Activated B cell treated with CpG ODN at 0.5 μM for 24 hours (primary cell): ENCODE measurements at regions of chr19 and their contacts with region 1.

Region 1: DNA sequence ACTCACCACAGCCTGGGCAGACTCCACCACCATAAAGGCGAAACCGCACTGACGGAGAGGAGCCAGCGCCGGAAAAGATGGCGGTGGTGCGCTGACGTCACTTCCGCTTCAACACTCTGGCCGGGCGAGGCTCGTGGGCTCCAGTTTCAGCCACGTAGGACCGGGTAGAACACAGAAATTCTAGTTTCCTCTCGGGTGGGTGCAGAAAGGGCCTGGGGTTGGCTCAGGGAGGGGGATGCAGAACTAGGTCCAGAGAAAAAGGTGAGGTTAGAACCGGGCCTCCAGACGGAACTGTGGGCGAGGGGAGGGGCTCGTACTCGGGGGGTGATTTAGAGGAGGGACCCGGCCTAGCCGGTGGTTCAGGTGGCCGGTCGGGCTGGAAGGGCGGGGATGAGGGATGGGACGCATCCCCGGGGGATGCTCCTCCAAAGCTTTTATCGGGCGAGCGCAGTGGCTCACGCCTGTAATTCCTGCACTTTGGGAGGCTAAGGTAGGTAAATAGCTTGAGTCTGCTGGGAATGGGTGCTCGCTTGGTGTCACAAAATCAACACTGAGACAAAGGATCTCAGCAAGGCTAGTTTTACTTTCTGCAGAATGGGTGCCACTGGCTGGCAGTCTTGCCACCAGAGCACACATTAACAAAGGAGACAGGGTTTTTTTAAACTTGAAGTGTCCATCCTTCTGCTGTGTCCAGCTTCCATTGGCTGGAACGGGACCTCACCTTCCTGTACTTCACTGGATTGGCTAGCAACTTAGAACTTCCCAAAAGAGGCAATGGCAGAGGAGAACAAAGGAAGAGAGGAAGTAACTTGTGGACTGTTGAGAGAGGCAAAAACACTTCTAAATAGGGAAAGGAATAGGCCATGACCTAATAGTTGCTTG is at the start of gene ZNF561:
- DNase-seq: peak; percentile 81
- ATAC-seq: peak; percentile 88
- H3K4me3 Mint-ChIP-seq: peak within 1 kb of the TSS; percentile 96
- H3K27ac Mint-ChIP-seq: peak within 1 kb of the TSS; percentile 98
- H3K4me1 Mint-ChIP-seq: peaks cover 20% of the 10 kb centered on the region
- H3K27me3 Mint-ChIP-seq: peaks cover 3% of the 10 kb centered on the region
- CTCF ChIP-seq: no peak
- total RNA-seq, gene ZNF561: 37.1 and 40.2 TPM in 2 replicates

Region 2: DNA sequence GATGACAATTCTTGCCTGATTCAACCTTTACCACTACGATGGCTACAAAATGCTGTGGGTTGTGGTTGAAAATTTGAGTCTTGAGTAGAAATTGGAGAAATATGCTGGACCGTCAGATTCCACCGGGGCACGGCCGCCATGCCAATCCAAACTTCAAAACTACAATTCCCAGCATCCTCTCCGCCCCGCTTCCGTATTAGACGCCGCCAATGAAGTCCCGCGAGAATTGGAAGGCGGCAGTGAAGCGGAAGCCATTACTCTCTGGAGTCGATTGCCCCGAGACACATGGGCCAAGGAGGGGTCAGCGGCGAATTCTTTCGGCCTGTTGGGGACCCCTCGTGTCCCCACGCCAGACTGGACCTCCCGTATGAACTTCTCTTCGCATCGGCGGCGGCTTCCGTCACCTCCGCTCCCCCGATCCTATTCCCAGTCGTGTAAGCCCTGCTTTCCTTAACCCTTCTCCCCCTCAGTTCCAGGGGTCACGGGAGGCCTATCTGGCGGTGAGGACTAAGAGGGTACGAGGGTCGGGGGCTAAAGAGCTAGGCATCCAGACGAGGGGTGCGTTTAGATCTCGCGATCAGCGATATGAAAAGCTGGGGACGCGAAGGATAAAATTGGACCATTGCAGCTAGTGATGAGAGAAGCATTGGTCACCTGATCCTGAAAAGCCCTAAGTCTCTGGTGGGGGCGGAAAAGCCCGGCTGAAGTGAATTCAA is 481.1 kb before region 1 on chr19 and contains the start of gene ZNF317:
- CTCF ChIA-PET with region 1: no interaction called
- POLR2A ChIA-PET with region 1: no interaction called
- intact Hi-C with region 1: loop called (anchors 1 kb)
- DNase-seq: peak; percentile 74
- ATAC-seq: peak; percentile 93
- H3K4me3 Mint-ChIP-seq: peak within 1 kb of the TSS; percentile 99
- H3K27ac Mint-ChIP-seq: peak within 1 kb of the TSS; percentile 98
- H3K4me1 Mint-ChIP-seq: peaks cover 42% of the 10 kb centered on the region
- H3K27me3 Mint-ChIP-seq: peaks cover 3% of the 10 kb centered on the region
- CTCF ChIP-seq: no peak
- total RNA-seq, gene ZNF317: 64.4 and 65.8 TPM in 2 replicates

Region 3: DNA sequence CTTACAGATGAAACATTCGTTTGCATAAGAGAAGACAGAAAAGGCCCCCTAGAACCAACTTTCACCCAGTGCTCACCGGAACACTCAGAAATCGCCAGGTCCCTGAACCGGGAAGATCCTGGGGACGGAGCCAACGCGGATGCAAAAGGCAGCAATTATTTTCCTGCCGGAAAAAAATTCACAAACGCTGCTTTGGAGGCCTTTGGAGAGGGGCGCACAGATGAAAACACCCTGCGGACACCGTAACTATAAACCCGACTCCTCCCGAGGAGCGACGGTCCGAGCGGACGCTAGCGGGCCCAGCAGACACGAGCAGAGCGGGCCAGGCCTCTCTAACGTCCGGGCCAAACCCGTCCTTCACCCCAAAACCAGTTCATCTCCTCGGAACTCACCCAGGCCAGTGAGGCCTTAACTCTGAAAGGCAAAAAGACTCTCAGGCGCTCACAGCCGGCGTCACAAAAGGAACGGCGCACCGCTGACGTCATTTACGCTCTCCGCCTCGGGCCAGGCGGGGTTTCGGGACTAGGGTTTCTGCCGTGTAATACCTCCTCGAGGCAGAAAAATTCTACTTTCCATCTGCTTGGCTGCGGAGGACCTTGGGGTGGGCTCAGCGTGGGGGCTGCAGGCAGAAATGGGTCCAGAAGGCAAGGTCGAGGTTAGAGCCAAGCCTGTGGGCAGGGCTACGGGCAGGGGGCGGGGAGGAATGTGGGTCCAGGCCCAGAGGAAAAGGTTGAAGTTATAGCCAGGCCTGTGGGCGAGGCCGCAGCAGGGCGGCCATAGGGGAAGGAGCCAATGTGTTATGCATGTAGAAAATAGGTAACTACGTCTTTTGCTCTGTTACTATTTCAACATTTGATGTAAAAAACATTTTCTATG is 83.0 kb before region 1 on chr19 and contains the start of gene ZNF426:
- CTCF ChIA-PET with region 1: no interaction called
- POLR2A ChIA-PET with region 1: no interaction called
- intact Hi-C with region 1: loop called (anchors 5 kb)
- DNase-seq: peak; percentile 79
- ATAC-seq: peak; percentile 92
- H3K4me3 Mint-ChIP-seq: peak within 1 kb of the TSS; percentile 98
- H3K27ac Mint-ChIP-seq: peak within 1 kb of the TSS; percentile 99
- H3K4me1 Mint-ChIP-seq: peaks cover 26% of the 10 kb centered on the region
- H3K27me3 Mint-ChIP-seq: no peaks in the 10 kb centered on the region
- CTCF ChIP-seq: no peak
- total RNA-seq, gene ZNF426: 18.8 and 22.7 TPM in 2 replicates

Region 4: DNA sequence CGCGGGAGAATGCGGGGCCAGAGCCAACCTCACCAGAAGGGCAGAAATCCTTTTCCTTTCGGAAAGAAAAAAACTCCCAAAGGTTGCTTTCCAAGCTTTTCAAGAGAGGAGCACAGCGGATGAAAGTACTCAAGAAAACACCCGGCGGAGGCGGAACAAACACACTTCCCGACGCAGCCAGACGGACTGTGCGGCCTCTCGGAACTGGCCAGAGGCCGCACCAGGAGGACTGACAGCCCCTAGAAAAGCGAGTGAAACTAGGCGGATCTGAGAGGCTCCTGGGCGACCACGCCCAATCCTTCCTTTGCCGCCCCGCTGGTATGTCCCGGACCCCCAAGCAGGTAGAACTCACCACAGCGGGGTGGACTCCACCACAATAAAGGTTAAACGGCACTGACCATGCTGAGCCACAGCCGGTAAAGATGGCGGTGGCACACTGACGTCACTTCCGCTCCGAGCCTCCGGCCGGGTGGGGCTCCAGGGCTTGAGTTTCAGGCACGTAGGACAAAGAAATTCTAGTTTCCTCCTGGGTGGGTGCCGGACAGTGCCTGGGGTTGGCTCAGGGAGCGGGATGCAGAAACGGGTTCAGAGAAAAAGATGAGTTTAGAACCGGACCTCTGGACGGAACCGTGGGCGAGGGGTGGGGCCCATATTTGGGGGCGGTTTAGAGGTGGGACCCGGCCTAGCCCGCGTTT is 53.4 kb after region 1 on chr19 and contains the start of gene ZNF562:
- CTCF ChIA-PET with region 1: no interaction called
- POLR2A ChIA-PET with region 1: interaction called, 5 read pairs
- intact Hi-C with region 1: loop called (anchors 1 kb)
- DNase-seq: peak; percentile 78
- ATAC-seq: peak; percentile 91
- H3K4me3 Mint-ChIP-seq: peak within 1 kb of the TSS; percentile 99
- H3K27ac Mint-ChIP-seq: peak within 1 kb of the TSS; percentile 98
- H3K4me1 Mint-ChIP-seq: peaks cover 29% of the 10 kb centered on the region
- H3K27me3 Mint-ChIP-seq: no peaks in the 10 kb centered on the region
- CTCF ChIP-seq: no peak
- total RNA-seq, gene ZNF562: 31.6 and 32.2 TPM in 2 replicates

Region 5: DNA sequence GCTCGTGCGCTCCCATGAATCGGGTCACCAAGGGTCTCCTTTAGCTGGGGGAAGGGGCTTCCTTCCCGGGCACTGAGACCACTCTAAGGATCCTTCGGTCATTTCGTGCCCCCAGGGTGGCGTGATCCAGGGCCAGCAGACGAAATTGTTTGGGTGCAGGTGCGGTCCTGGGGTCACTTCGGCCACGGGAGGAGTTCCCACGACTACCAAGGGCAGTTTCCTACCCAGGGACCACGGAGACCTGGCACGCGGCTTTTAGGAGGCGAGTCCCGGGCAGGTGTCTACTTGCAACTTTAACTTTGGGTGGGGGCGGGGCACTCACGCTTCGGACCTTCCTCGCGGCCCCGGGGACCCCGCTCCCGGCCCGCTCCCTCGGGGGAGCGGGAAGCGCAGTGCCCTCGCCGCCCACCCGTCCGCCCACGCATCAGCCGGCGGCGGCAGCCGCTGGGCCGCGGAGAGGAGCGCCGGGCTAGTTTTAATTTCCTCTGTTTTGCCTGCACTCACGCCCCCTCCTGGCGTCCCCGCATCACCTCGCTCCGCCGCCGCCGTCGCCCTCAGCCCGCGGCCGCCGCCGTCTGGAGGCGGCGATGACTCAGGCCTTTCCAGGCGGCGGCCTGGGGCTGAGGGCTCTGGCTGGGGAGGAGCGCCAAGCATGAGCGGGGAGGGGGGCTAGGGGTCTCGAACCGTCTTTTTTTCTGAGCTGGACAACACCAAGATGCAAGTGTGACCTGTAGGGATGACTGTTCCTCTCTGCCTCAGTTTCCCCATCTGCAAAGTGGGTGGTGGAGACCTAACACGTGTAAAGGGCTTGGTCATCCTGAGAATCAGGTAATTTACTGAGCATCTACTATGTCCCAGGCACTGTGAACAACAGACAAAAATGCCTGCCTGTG is 293.2 kb after region 1 on chr19:
- CTCF ChIA-PET with region 1: no interaction called
- POLR2A ChIA-PET with region 1: no interaction called
- intact Hi-C with region 1: loop called (anchors 10 kb)
- DNase-seq: peak; percentile 35
- ATAC-seq: peak; percentile 84
- H3K4me3 Mint-ChIP-seq: no peak overlapping the region
- H3K27ac Mint-ChIP-seq: no peak overlapping the region
- H3K4me1 Mint-ChIP-seq: peaks cover 12% of the 10 kb centered on the region
- H3K27me3 Mint-ChIP-seq: peaks cover 35% of the 10 kb centered on the region
- CTCF ChIP-seq: no peak